ENCODE measurements at regions of chr11 and their contacts with region 1.

Region 1: GRCh38 chr11:11813288-11813962 is 28.3 kb upstream of the USP47 start:
- DNase-seq: peak; percentile 94
- ATAC-seq: peak; percentile 99
- H3K4me3 ChIP-seq: peak overlapping the region in 1 of 3 experiments; percentile 12; a peak in 1 of 6 replicates
- H3K27ac ChIP-seq: peak overlapping the region; percentile 66
- H3K4me1 ChIP-seq: peaks cover 31% of the 10 kb centered on the region
- H3K27me3 ChIP-seq: no peaks in the 10 kb centered on the region
- CTCF ChIP-seq: no peak
- EP300 ChIP-seq: peak in 1 of 2 experiments; percentile 72; a peak in 2 of 4 replicates
- POLR2A ChIP-seq: no peak
- RAD21 ChIP-seq: no peak

Region 2: DNA sequence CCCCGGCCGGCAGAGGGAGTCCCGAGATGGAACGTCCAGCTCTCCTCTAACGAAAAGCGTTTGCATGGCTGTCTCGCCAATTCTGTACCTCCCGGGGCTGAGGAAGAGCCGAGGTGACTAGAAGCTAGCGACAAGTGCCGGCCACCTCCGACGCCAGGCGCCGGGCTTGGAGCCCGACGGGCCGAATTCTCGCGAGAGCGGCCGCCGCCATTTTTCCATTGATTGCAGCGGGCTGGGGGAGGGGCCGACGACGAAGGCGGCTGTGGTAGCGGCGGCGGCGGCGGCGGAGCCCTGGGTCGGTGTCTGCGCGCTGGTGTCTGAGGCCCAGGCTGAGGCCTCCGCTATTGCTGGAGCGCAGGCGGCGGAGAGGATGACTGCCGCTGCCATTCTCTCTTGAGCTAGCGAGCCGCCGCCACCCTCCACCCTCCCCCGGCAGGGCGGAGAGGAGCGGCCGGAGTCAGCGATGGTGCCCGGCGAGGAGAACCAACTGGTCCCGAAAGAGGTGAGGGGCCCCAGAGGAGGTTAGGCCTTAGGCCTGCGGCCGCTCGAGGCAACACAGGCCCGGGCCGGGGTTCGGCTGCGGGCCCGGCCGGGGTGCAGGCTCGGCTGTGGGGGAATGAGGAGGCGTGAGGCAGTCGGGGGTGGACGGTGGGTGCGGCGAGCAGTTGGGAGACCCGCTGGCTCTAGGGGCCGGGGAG is 28.4 kb after region 1 on chr11 and contains the start of gene USP47:
- CTCF ChIA-PET with region 1: no interaction called
- POLR2A ChIA-PET with region 1: interaction called, 18 read pairs
- in situ Hi-C with region 1: no loop called
- intact Hi-C with region 1: no loop called
- DNase-seq: peak; percentile 74
- ATAC-seq: peak; percentile 89
- H3K4me3 ChIP-seq: peak within 1 kb of the TSS; percentile 74 to 98 (median 86)
- H3K27ac ChIP-seq: peak within 1 kb of the TSS; percentile 98
- H3K4me1 ChIP-seq: peaks cover 33% of the 10 kb centered on the region
- H3K27me3 ChIP-seq: no peaks in the 10 kb centered on the region
- CTCF ChIP-seq: peak; percentile 60
- EP300 ChIP-seq: no peak; a peak in 1 of 4 replicates
- POLR2A ChIP-seq: peak; percentile 88 to 89
- RAD21 ChIP-seq: peak; percentile 53
- total RNA-seq, gene USP47: 52.7 and 64.6 TPM in 2 replicates

Region 3: GRCh38 chr11:12182676-12183541 is 369.5 kb after region 1 on chr11:
- CTCF ChIA-PET with region 1: no interaction called
- POLR2A ChIA-PET with region 1: no interaction called
- in situ Hi-C with region 1: no loop called
- intact Hi-C with region 1: no loop called
- DNase-seq: peak; percentile 58
- ATAC-seq: peak; percentile 73
- H3K4me3 ChIP-seq: no peak overlapping the region
- H3K27ac ChIP-seq: no peak overlapping the region
- H3K4me1 ChIP-seq: 0 out of 2 replicates have a peak, but pooled peaks cover 7% of the 10 kb centered on the region
- H3K27me3 ChIP-seq: no peaks in the 10 kb centered on the region
- CTCF ChIP-seq: no peak
- EP300 ChIP-seq: no peak
- POLR2A ChIP-seq: no peak
- RAD21 ChIP-seq: no peak

Measured in HepG2 (cell line).